ENCODE measurements at regions of chr3 and their contacts with region 1.

Region 1: GRCh38 chr3:169662132-169662842 is 1.2 kb downstream of the MECOM start:
- DNase-seq: peak; percentile 84
- H3K4me3 ChIP-seq: peak overlapping the region; percentile 23 to 77 (median 64)
- H3K27ac ChIP-seq: peak overlapping the region; percentile 81
- H3K4me1 ChIP-seq: peaks cover 66% of the 10 kb centered on the region
- H3K27me3 ChIP-seq: no peaks in the 10 kb centered on the region
- CTCF ChIP-seq: peak; percentile 46 to 77
- POLR2A ChIP-seq: peak; percentile 55

Region 2: GRCh38 chr3:169218314-169218983 is 443.8 kb before region 1 on chr3:
- CTCF ChIA-PET with region 1: interaction called, 54 read pairs
- POLR2A ChIA-PET with region 1: no interaction called
- dilution Hi-C with region 1: no loop called
- intact Hi-C with region 1: loop called (anchors 1 kb)
- DNase-seq: peak; percentile 98
- H3K4me3 ChIP-seq: no peak overlapping the region
- H3K27ac ChIP-seq: peak overlapping the region; percentile 66
- H3K4me1 ChIP-seq: peaks cover 23% of the 10 kb centered on the region
- H3K27me3 ChIP-seq: no peaks in the 10 kb centered on the region
- CTCF ChIP-seq: peak; percentile 74 to 89
- POLR2A ChIP-seq: no peak

Region 3: DNA sequence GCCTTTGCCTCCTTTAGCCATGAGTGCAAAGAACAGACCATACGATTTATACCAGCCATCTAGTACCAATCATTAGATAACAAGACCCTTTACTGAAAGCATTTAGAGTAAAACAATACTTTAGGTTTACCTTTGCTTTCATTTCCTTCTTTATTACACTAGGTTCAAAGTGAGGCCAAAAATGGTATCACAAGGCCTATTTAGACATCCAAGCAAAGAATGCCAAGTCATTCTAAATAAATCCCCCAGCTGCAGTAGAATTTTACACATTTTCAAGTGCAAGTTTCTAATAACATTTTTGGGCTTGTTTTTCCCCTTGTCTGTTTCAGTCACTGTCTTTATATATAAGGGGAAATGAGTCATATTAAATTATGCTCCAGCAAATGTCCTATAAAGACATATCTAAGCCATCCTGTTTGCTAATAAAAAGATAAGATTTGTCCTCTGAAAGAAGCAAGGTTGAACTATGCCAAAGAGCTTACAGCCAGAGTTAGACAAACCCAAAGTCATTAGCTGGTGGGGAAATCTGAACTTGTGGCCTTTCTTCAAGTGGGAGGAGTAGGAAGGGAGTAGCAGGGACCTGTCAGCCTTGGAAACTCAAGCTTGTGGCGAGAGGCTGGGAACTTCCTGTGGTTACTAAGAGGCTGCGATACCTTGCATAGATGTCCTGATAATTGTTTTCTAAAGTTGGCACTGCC is 231.4 kb before region 1 on chr3:
- CTCF ChIA-PET with region 1: interaction called, 4 read pairs
- POLR2A ChIA-PET with region 1: interaction called, 3 read pairs
- dilution Hi-C with region 1: no loop called
- intact Hi-C with region 1: loop called (anchors 1 kb)
- DNase-seq: peak; percentile 90
- H3K4me3 ChIP-seq: no peak overlapping the region
- H3K27ac ChIP-seq: peak overlapping the region; percentile 79
- H3K4me1 ChIP-seq: peaks cover 30% of the 10 kb centered on the region
- H3K27me3 ChIP-seq: no peaks in the 10 kb centered on the region
- CTCF ChIP-seq: no peak
- POLR2A ChIP-seq: no peak

Region 4: DNA sequence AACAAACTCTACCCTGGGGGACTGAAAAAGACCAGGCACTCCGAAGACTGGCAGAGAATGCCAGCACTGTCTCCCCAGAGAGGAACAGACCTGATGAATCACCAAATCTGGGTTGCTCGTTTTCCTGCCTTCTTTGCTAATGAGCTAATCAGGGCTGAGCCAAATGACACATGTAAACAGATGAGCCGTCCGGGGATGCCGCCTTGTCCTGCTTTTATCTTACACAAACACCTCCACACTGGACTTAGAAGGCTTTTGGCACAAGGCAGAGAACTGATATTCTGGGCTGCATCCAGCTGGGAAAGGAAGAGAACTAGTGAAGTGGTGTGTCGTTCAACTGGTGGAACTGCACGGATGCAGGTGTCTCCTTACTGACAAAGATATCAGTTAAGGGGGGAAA is 86.9 kb before region 1 on chr3:
- CTCF ChIA-PET with region 1: no interaction called
- POLR2A ChIA-PET with region 1: no interaction called
- dilution Hi-C with region 1: no loop called
- intact Hi-C with region 1: loop called (anchors 2 kb)
- DNase-seq: peak; percentile 85
- H3K4me3 ChIP-seq: peak overlapping the region in 1 of 3 experiments; percentile 28
- H3K27ac ChIP-seq: peak overlapping the region; percentile 15
- H3K4me1 ChIP-seq: peaks cover 25% of the 10 kb centered on the region
- H3K27me3 ChIP-seq: no peaks in the 10 kb centered on the region
- CTCF ChIP-seq: no peak
- POLR2A ChIP-seq: peak; percentile 16

Region 5: DNA sequence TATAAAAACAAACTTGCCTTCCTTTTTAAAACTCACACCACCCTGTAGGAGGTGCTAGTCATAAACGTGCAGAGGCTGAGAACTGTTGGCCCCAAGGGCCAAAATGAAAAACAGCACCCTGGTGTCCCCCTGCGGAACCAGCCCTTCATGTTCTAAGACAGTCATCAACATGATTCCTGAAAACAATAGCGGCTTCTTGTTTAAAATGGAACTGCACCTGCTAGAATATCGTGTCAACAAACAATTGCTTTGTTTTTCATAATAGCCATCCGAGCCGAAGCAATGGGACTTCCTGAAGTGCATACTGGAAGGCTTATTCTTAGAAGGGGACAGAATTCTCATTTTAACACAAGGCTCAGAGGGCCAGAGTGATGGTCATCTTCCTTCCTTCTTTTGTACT is 42.5 kb before region 1 on chr3:
- CTCF ChIA-PET with region 1: interaction called, 3 read pairs
- POLR2A ChIA-PET with region 1: interaction called, 3 read pairs
- dilution Hi-C with region 1: no loop called
- intact Hi-C with region 1: loop called (anchors 1 kb)
- DNase-seq: peak; percentile 73
- H3K4me3 ChIP-seq: no peak overlapping the region
- H3K27ac ChIP-seq: peak overlapping the region; percentile 9
- H3K4me1 ChIP-seq: peaks cover 12% of the 10 kb centered on the region
- H3K27me3 ChIP-seq: no peaks in the 10 kb centered on the region
- CTCF ChIP-seq: peak in 1 of 2 donors; percentile 15
- POLR2A ChIP-seq: no peak

Measured in endothelial cell of umbilical vein (primary cell).